Tibial artery (tissue), 4 donors: ENCODE measurements at regions of chr11 and their contacts with region 1.

Region 1: DNA sequence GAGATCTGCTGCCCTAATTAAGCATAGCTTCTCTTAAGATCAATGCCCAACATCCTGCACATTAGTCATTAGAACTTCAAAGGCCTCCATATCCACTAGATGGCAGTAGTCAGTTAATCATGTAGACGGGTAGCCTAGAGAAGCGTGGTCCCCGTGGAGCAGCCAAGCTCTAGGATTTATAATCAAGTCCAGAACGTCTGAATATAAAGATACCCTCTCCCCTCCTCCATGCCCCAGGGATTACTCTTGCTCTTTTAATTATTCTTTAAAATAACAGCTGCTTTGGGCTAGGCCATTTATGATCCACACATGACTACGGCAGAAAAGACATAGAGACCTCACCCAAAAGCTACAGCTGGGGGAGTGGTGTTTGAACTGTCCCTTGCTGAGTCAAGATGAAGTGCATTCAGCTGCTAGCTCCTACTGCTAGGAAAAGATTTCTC is 327.6 kb upstream of the PLET1 start:
- DNase-seq: peak; percentile 56 to 65
- H3K4me3 ChIP-seq: no peak overlapping the region
- H3K27ac ChIP-seq: no peak overlapping the region
- H3K4me1 ChIP-seq: peaks cover 0 to 4% (median 0%) of the 10 kb centered on the region in 4 donors
- H3K27me3 ChIP-seq: no peaks in the 10 kb centered on the region
- CTCF ChIP-seq: peak; percentile 63 to 75

Region 2: GRCh38 chr11:112523477-112523876 is 64.8 kb before region 1 on chr11:
- intact Hi-C with region 1: no loop called
- DNase-seq: peak in 1 of 2 donors; percentile 66
- H3K4me3 ChIP-seq: no peak overlapping the region
- H3K27ac ChIP-seq: peak overlapping the region; percentile 65 to 71
- H3K4me1 ChIP-seq: peaks cover 0 to 40% (median 30%) of the 10 kb centered on the region in 4 donors
- H3K27me3 ChIP-seq: no peaks in the 10 kb centered on the region
- CTCF ChIP-seq: no peak

Region 3: GRCh38 chr11:112620606-112621394 is 32.5 kb after region 1 on chr11:
- intact Hi-C with region 1: no loop called
- DNase-seq: no peak
- H3K4me3 ChIP-seq: no peak overlapping the region
- H3K27ac ChIP-seq: no peak overlapping the region
- H3K4me1 ChIP-seq: no peaks in the 10 kb centered on the region
- H3K27me3 ChIP-seq: peaks cover 0 to 3% of the 10 kb centered on the region in 2 donors
- CTCF ChIP-seq: no peak

Region 4: DNA sequence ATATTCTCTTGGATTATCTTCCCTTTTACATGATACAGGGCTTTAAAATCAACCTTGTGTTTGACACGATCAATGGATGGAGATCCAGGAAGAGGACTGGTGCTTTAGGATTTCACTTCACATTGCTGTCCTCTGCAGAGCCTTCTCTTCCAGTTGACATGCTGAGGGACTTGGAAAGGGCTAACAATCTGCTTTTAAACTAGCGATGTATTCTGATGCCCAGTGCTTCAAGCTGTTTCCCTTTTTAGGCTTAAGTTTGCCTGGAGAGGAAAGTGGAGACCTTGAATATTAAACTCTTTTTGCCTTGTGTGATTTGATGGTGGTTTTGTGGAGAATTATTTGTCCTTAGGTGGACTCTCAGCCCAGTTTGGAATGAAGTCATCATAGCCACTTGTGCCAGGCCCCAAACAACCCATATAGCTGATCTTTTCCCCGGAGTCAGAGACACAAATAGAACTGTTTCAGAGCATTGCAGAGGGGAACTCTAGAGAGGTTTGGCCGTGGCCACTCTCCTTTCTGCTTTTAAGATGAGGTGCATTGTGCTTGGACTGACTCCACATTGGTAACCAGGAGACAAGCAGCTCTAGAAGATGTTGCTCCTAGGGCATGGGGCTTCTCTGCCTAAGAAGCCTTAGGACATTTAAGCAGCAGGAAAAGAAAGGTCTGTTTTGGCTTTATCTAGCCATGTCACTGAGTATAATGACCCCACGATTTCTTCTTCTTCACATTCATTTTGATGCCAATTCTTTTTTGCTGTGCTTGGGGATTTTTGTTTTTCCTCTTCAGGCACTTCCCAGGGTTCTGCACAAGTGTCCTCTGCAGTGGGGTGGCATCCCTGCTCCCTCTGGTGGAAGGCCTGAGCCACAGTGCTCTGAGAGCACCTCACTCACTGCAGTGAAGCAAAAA is 525.8 kb after region 1 on chr11:
- intact Hi-C with region 1: loop called (anchors 10 kb)
- DNase-seq: peak in 1 of 2 donors; percentile 25
- H3K4me3 ChIP-seq: no peak overlapping the region
- H3K27ac ChIP-seq: no peak overlapping the region
- H3K4me1 ChIP-seq: peaks cover 0 to 10% (median 5%) of the 10 kb centered on the region in 4 donors
- H3K27me3 ChIP-seq: no peaks in the 10 kb centered on the region
- CTCF ChIP-seq: peak; percentile 66 to 70

Region 5: GRCh38 chr11:113289431-113290187 is 701.3 kb after region 1 on chr11:
- intact Hi-C with region 1: loop called (anchors 5 kb)
- DNase-seq: peak in 1 of 2 donors; percentile 71
- H3K4me3 ChIP-seq: no peak overlapping the region
- H3K27ac ChIP-seq: no peak overlapping the region
- H3K4me1 ChIP-seq: no peaks in the 10 kb centered on the region
- H3K27me3 ChIP-seq: peaks cover 0 to 8% of the 10 kb centered on the region in 2 donors
- CTCF ChIP-seq: peak; percentile 80 to 85